Activated CD4-positive, alpha-beta memory T cell treated with anti-CD3 and anti-CD28 coated beads for 36 hours (primary cell): ENCODE measurements at regions of chr5 and their contacts with region 1.

Region 1: GRCh38 chr5:68287976-68288706 is 72.6 kb downstream of the PIK3R1 start:
- DNase-seq: peak; percentile 63
- H3K4me3 Mint-ChIP-seq: peak overlapping the region; percentile 84
- H3K27ac Mint-ChIP-seq: peak overlapping the region; percentile 88
- H3K4me1 Mint-ChIP-seq: peaks cover 86% of the 10 kb centered on the region
- H3K27me3 Mint-ChIP-seq: no peaks in the 10 kb centered on the region

Region 2: DNA sequence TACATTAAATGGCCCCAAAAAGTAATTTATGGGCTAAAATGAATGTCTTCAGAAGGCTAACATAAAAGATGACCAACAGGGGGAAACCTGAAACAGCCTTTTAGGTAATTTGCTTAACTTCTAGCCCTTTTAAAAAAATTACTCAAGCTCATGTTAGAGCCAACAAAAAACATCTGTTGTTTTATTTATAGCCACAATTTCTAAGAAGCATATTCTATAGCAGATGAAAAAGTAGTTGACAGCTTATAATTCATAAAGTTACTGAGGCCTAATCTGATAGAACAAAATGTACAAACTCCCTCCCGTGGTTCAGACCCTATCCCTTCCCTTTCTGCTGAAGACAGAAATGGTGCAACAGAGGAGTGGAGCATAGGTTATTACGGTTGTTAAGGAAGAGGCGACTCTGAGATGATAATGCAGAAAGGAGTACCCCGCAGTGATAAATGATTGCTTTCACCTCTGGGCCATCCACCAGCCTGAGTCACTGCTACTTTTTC is 26.5 kb before region 1 on chr5:
- CTCF ChIA-PET with region 1: interaction called, 14 read pairs
- POLR2A ChIA-PET with region 1: no interaction called
- intact Hi-C with region 1: no loop called
- DNase-seq: no peak
- H3K4me3 Mint-ChIP-seq: no peak overlapping the region
- H3K27ac Mint-ChIP-seq: peak overlapping the region; percentile 61
- H3K4me1 Mint-ChIP-seq: peaks cover 82% of the 10 kb centered on the region
- H3K27me3 Mint-ChIP-seq: no peaks in the 10 kb centered on the region

Region 3: GRCh38 chr5:68315679-68316271 is 27.6 kb after region 1 on chr5:
- CTCF ChIA-PET with region 1: interaction called, 6 read pairs
- POLR2A ChIA-PET with region 1: no interaction called
- intact Hi-C with region 1: loop called (anchors 2 kb)
- DNase-seq: peak; percentile 69
- H3K4me3 Mint-ChIP-seq: no peak overlapping the region
- H3K27ac Mint-ChIP-seq: no peak overlapping the region
- H3K4me1 Mint-ChIP-seq: peaks cover 11% of the 10 kb centered on the region
- H3K27me3 Mint-ChIP-seq: peaks cover 2% of the 10 kb centered on the region

Region 4: DNA sequence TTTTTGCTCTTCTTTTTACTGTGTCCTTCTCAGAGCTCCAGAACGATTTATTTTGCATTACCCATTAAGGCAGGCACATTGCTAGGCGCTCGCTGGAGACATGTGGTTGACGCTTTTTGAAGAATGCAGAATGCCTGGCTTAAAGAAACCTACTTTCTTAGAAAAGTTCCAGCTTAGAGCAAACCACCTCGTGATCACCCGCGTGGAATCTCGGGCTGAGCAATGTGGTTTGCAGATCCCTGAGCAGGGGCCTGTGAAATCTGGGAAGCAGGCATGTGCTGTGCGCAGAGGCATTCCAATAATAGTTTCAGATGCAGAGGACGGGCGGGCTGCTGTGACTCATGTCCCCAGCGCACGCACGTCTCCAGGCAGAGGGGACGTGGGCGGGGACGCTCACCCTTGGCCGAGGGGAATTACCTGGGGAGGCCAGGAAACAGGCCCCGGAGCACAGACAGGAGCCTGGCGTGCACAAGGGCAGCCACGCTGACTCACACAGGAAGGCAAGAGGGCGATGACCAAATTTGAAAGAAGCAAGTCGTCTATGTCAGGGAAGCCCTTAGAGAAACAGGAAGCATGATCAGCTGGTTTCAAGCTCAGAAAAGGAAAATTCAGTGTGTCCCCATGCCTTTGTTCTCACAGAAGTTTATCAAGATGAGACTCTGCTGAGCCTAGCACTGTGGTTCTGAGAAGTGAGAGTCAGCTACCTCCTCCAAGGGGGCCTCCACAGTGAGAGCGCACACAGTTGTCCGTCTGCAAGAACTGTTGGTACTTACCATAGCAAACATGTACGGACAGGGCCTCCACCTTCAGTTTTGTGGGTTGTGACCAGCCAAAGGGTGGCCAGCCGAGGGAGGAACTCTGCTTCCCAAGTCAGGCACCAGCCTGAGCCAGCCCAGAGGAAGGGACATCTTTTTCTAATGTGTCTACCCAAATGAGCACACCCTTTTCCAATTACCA is 146.1 kb after region 1 on chr5:
- CTCF ChIA-PET with region 1: interaction called, 20 read pairs
- POLR2A ChIA-PET with region 1: no interaction called
- intact Hi-C with region 1: loop called (anchors 1 kb)
- DNase-seq: peak; percentile 98
- H3K4me3 Mint-ChIP-seq: peak overlapping the region; percentile 42
- H3K27ac Mint-ChIP-seq: peak overlapping the region; percentile 77
- H3K4me1 Mint-ChIP-seq: peaks cover 53% of the 10 kb centered on the region
- H3K27me3 Mint-ChIP-seq: peaks cover 2% of the 10 kb centered on the region

Region 5: GRCh38 chr5:68711293-68712200 is 423.4 kb after region 1 on chr5:
- CTCF ChIA-PET with region 1: interaction called, 3 read pairs
- POLR2A ChIA-PET with region 1: no interaction called
- intact Hi-C with region 1: loop called (anchors 10 kb)
- DNase-seq: peak; percentile 16
- H3K4me3 Mint-ChIP-seq: no peak overlapping the region
- H3K27ac Mint-ChIP-seq: peak overlapping the region; percentile 6
- H3K4me1 Mint-ChIP-seq: peaks cover 26% of the 10 kb centered on the region
- H3K27me3 Mint-ChIP-seq: no peaks in the 10 kb centered on the region

Region 6: GRCh38 chr5:69007726-69008368 is 719.7 kb after region 1 on chr5:
- CTCF ChIA-PET with region 1: interaction called, 4 read pairs
- POLR2A ChIA-PET with region 1: no interaction called
- intact Hi-C with region 1: loop called (anchors 1 kb)
- DNase-seq: peak; percentile 82
- H3K4me3 Mint-ChIP-seq: no peak overlapping the region
- H3K27ac Mint-ChIP-seq: no peak overlapping the region
- H3K4me1 Mint-ChIP-seq: no peaks in the 10 kb centered on the region
- H3K27me3 Mint-ChIP-seq: peaks cover 21% of the 10 kb centered on the region